ENCODE measurements at regions of chr16 and their contacts with region 1.

Region 1: GRCh38 chr16:4461250-4462085 is 13.0 kb downstream of the NMRAL1 start:
- DNase-seq: peak; percentile 97
- ATAC-seq: peak; percentile 77
- H3K4me3 ChIP-seq: peak overlapping the region; percentile 27 to 67 (median 43)
- H3K27ac ChIP-seq: peak overlapping the region; percentile 98
- H3K4me1 ChIP-seq: peaks cover 64% of the 10 kb centered on the region
- H3K27me3 ChIP-seq: no peaks in the 10 kb centered on the region
- CTCF ChIP-seq: peak; percentile 55
- EP300 ChIP-seq: peak; percentile 65 to 80; a peak in 3 of 4 replicates
- POLR2A ChIP-seq: peak in 1 of 2 experiments; percentile 58; a peak in 2 of 4 replicates
- RAD21 ChIP-seq: peak; percentile 48; the same call in 1 of the 2 replicates

Region 2: DNA sequence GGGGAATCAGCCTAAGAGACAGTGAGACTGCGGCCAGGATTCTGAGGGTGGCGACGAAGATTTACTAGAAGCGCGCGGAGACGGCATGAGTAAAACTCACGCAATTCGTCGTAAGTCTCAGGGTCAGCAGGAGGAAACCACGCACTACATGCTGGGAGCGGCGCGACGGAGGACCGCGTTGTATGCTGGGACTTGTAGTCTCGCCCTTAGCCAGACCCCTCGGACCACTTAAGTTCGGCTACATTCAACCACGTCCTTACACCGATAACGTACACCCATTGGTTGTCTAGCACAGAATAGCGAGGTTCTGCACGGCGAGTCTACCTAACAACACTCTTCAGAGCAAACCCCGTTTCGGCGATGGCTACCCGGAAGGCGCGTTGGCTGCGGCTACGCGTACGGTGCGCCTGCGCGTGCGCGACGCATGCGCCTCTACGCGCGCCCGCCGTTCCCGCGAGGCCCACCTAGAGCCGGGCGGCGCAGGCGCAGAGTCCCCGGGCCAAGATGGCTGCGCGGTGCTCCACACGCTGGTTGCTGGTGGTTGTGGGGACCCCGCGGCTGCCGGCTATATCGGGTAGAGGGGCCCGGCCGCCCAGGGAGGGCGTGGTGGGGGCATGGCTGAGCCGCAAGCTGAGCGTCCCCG is 36.0 kb before region 1 on chr16 and contains the start of gene DNAJA3:
- CTCF ChIA-PET with region 1: interaction called, 3 read pairs
- POLR2A ChIA-PET with region 1: interaction called, 20 read pairs
- in situ Hi-C with region 1: no loop called
- intact Hi-C with region 1: no loop called
- DNase-seq: peak; percentile 89
- ATAC-seq: peak; percentile 93
- H3K4me3 ChIP-seq: peak within 1 kb of the TSS; percentile 82 to 85 (median 84)
- H3K27ac ChIP-seq: peak within 1 kb of the TSS; percentile 99
- H3K4me1 ChIP-seq: peaks cover 39% of the 10 kb centered on the region
- H3K27me3 ChIP-seq: no peaks in the 10 kb centered on the region; a peak in 1 of 5 replicates
- CTCF ChIP-seq: no peak
- EP300 ChIP-seq: no peak
- POLR2A ChIP-seq: peak; percentile 80 to 90
- RAD21 ChIP-seq: no peak; the same call in 1 of the 2 replicates
- total RNA-seq, gene DNAJA3: 75.3 and 77.0 TPM in 2 replicates

Region 3: GRCh38 chr16:4475880-4476788 is 14.7 kb after region 1 on chr16 and contains the start of gene HMOX2:
- CTCF ChIA-PET with region 1: no interaction called
- POLR2A ChIA-PET with region 1: interaction called, 175 read pairs
- in situ Hi-C with region 1: no loop called
- intact Hi-C with region 1: loop called (anchors 1 kb)
- DNase-seq: peak; percentile 86
- ATAC-seq: peak; percentile 93
- H3K4me3 ChIP-seq: peak within 1 kb of the TSS; percentile 70 to 90 (median 75)
- H3K27ac ChIP-seq: peak within 1 kb of the TSS; percentile 78
- H3K4me1 ChIP-seq: peaks cover 42% of the 10 kb centered on the region
- H3K27me3 ChIP-seq: no peaks in the 10 kb centered on the region
- CTCF ChIP-seq: peak; percentile 80
- EP300 ChIP-seq: 0 out of 4 replicates have a peak, but pooled peaks have one; percentile 15 to 26
- POLR2A ChIP-seq: peak; percentile 85 to 99
- RAD21 ChIP-seq: peak; percentile 74
- total RNA-seq, gene HMOX2: 70.4 and 82.4 TPM in 2 replicates

Measured in HepG2 (cell line).